Activated CD8-positive, alpha-beta T cell treated with anti-CD3 and anti-CD28 coated beads, Interleukin-2, amount 10 ng/mL, durations not matched to agents 7 days and 5 days (primary cell): ENCODE measurements at regions of chr2 and their contacts with region 1.

Region 1: GRCh38 chr2:65129826-65130663 is at the start of gene RAB1A:
- DNase-seq: peak; percentile 100
- ATAC-seq: peak; percentile 96
- H3K4me3 Mint-ChIP-seq: peak within 1 kb of the TSS; percentile 100
- H3K27ac Mint-ChIP-seq: peak within 1 kb of the TSS; percentile 100
- H3K4me1 Mint-ChIP-seq: peaks cover 32% of the 10 kb centered on the region
- H3K27me3 Mint-ChIP-seq: no peaks in the 10 kb centered on the region
- total RNA-seq, gene RAB1A: 58.7 to 62.7 TPM

Region 2: DNA sequence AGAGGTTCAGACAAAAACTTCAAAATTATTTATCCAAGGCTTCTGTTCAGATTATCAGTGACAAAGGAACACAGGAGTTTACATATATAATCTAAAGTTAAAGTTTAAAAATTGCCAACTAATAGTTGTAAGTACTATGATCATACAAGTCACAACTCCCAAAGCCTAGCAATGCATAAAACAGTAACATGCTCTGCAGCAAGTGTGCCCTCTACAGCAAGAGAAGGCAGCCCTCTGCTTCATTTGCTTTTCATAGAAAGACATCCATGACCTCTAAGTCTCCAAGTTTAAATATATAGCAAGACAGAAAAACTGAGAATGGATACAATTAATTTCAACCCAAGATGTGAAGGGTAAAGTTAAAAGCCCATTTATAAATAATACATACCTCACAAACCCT is 13.4 kb before region 1 on chr2:
- CTCF ChIA-PET with region 1: interaction called, 14 read pairs
- POLR2A ChIA-PET with region 1: interaction called, 10 read pairs
- DNase-seq: no peak
- ATAC-seq: no peak
- H3K4me3 Mint-ChIP-seq: no peak overlapping the region
- H3K27ac Mint-ChIP-seq: no peak overlapping the region
- H3K4me1 Mint-ChIP-seq: peaks cover 32% of the 10 kb centered on the region
- H3K27me3 Mint-ChIP-seq: no peaks in the 10 kb centered on the region

Region 3: DNA sequence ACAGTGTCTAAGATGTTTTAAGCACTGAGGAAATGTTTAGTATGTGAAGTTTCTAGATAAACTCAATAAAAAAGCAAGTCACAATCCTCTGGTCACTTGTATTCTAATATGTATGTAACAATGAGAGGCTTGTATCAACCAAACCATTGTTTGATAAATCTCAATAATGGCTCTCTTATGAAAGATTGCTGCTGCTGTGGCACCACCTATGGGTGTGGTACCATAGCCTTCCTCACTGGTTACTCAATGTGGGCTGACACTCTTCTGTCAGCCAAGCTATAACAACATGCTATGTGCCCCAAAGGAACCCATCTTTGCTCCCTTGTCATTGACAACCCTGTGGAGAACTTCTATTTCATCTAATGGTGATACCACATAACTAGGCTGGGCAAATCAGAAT is 12.5 kb after region 1 on chr2:
- CTCF ChIA-PET with region 1: interaction called, 13 read pairs
- POLR2A ChIA-PET with region 1: interaction called, 8 read pairs
- DNase-seq: no peak
- ATAC-seq: peak; percentile 49
- H3K4me3 Mint-ChIP-seq: no peak overlapping the region
- H3K27ac Mint-ChIP-seq: no peak overlapping the region
- H3K4me1 Mint-ChIP-seq: no peaks in the 10 kb centered on the region
- H3K27me3 Mint-ChIP-seq: peaks cover 20% of the 10 kb centered on the region

Region 4: DNA sequence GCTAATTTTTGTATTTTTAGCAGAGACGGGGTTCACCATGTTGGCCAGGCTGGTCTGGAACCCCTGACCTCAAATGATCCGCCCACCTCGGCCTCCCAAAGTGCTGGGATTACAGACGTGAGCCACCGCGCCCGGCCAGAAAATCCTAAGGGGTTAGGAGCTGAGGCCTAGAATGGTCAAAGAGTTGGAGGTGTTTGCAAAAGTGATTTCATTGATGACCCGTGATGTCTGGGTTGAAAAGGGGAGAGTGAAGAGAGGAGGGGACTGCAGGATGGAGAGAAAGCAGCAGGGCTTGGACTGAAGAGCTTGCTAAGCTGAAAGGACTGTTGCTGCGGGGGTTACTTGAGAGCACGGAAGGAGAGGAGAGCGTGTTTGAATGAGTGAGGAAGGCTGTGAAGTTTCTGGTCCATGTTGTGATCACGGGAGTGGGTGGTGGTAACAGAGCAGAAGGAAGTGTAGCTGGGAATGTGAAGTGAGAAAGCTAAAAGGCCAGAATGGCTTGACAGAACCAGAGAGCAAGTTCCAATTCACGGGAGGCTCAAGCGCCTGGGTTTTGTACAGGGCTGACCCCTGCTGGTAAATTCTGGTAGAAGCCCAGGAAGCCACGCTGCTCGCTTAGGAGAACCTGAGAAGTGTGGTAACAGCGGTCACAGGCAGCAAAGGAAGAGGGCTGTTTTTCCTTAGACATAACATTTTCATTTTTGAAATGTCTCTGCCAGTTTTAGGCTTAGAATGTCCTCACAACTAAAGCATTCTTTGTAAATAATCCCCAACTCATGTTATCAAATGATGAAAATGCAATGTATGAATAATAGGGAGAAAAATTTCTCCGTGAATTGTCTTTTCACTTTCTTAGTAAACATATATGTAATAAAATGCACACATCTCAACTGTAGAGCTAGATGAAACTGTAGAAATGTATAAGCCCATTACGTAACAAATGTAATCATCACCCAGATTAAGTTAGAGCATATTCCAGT is 57.1 kb after region 1 on chr2:
- CTCF ChIA-PET with region 1: interaction called, 10 read pairs
- POLR2A ChIA-PET with region 1: no interaction called
- DNase-seq: peak; percentile 78
- ATAC-seq: peak; percentile 98
- H3K4me3 Mint-ChIP-seq: no peak overlapping the region
- H3K27ac Mint-ChIP-seq: no peak overlapping the region
- H3K4me1 Mint-ChIP-seq: peaks cover 11% of the 10 kb centered on the region
- H3K27me3 Mint-ChIP-seq: peaks cover 3% of the 10 kb centered on the region